PC-9 (cell line): ENCODE measurements at regions of chr15 and their contacts with region 1.

Region 1: DNA sequence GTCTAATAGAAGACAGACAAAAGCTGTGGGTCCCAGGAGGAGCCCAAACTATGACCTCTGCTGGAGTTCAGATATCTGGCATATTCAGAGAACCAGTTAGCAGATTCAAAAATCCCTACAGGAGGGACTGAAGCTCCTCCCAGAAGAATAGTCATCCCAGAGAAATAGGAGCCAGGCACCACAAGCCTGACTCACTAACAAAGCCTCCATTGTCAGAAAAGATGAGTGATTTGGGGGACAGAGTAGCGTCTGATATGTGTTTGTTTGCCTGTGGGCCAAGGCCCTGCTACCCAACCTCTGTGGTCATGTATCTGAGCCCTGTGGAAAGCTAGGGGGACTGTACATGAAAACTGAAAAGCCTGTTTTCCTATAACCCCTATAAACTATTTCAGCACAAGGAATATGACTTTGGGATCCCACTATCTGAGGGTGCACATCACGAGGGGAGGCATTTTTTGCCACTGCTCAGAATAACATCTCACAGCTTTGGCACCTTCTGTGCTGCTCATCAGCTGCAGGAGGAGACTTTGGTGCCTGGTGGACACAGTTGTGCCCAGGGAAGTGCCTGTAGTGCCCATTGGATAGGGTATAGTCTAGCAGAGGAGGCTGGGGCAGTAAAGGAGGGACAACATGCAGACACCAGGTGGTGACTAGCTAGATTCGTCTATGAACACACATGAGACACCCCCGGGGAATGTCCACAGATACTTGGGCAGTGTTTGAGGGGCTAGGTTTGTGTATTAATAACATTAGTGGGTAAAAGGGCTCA is 9.7 kb upstream of the LARP6 start:
- DNase-seq: peak; percentile 46 to 82
- H3K4me3 ChIP-seq: no peak overlapping the region
- H3K27ac ChIP-seq: peak overlapping the region; percentile 46; the same call in 1 of the 2 replicates
- H3K4me1 ChIP-seq: peaks cover 15% of the 10 kb centered on the region
- H3K27me3 ChIP-seq: no peaks in the 10 kb centered on the region
- CTCF ChIP-seq: no peak

Region 2: DNA sequence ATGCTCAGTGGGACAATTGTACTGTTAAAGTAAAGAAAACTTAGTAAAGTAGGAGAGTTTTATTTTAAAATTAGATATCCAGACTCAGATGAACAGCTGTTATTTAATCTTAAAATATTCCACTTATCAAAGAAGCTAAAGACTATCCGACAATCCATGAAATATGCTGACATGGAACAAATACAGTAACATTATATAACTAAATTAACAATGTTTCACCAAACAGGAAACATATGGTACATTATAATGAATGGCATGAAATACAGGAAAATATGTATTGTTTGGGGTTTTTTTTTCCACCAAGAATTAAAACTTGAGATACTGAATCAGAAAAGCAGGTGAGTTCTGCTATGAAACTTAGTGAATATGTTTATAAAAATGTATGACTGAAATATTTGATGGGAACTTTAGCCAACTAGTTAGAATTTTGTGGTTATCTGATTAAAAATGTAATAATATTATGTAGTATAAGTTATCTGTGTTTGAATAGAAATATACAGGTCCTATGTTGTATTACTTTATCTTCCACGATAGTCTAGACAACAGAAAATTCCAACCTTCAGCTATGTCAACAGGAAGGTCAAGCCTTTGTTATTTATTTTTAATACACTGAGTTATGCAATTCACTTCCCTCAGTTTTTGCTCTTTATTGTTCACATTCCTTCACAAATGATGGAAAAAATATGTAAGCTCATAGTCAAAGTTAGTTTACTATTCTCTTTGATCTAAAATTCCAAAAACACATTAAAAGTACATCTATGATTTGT is 173.0 kb before region 1 on chr15:
- CTCF ChIA-PET with region 1: interaction called, 14 read pairs
- POLR2A ChIA-PET with region 1: no interaction called
- intact Hi-C with region 1: no loop called
- DNase-seq: peak in 1 of 2 experiments; percentile 38
- H3K4me3 ChIP-seq: no peak overlapping the region
- H3K27ac ChIP-seq: no peak overlapping the region
- H3K4me1 ChIP-seq: peaks cover 11% of the 10 kb centered on the region
- H3K27me3 ChIP-seq: no peaks in the 10 kb centered on the region
- CTCF ChIP-seq: no peak